Posterior cingulate gyrus (tissue), 11 donors: ENCODE measurements at regions of chr3 and their contacts with region 1.

Region 1: GRCh38 chr3:65447264-65448027 is 591.3 kb downstream of the MAGI1 start:
- DNase-seq: no peak

Region 2: DNA sequence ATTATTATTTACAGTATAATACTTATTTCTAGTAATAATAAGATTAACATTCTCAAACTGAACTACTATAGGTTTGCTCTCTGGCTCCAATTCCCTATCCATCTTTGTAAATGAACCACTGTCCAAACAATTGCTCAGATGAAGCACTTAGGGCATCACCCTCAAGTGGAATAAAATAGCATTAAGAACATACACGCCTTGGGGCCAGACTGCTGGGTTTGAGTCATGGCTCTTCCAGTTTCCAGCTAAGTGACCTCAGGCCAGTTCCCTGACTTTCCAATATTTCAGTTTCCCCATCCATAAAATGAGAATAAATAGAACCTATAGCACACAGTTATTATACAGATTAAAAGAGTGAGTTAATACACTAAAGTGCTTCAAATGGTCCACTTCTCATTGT is 84.1 kb after region 1 on chr3:
- intact Hi-C with region 1: loop called (anchors 2 kb)
- DNase-seq: no peak

Region 3: GRCh38 chr3:65597952-65598413 is 150.5 kb after region 1 on chr3:
- intact Hi-C with region 1: no loop called
- DNase-seq: peak in 8 of 10 donors; percentile 13 to 87 (median 32)